ENCODE measurements at regions of chr6 and their contacts with region 1.

Region 1: DNA sequence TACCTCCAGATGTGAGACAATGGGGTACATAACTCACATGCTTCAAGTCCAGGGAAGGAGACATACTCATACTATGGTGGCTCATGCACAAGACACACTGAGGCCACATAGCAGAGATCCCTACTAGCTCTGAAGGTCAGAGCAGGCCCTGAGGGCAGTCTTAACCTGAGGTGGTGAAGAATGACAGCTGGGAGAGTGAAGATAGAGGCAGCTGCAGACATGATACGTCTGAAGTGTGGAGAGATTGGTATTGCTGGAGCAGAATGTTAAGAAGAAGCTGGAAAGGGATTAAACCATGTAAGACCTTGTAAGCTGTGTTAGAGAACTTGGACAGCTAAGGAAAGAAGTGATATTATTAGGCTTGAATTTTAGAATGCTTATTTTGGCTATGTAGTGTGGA is 32.9 kb downstream of the PGM3 start:
- DNase-seq: no peak
- ATAC-seq: peak; percentile 8

Region 2: GRCh38 chr6:83119742-83120300 is 40.3 kb before region 1 on chr6:
- intact Hi-C with region 1: loop called (anchors 5 kb)
- DNase-seq: no peak
- ATAC-seq: no peak

Measured in Right ventricle myocardium inferior (tissue), 1 donor.